Transverse colon (tissue), 4 donors: ENCODE measurements at regions of chr12 and their contacts with region 1.

Region 1: DNA sequence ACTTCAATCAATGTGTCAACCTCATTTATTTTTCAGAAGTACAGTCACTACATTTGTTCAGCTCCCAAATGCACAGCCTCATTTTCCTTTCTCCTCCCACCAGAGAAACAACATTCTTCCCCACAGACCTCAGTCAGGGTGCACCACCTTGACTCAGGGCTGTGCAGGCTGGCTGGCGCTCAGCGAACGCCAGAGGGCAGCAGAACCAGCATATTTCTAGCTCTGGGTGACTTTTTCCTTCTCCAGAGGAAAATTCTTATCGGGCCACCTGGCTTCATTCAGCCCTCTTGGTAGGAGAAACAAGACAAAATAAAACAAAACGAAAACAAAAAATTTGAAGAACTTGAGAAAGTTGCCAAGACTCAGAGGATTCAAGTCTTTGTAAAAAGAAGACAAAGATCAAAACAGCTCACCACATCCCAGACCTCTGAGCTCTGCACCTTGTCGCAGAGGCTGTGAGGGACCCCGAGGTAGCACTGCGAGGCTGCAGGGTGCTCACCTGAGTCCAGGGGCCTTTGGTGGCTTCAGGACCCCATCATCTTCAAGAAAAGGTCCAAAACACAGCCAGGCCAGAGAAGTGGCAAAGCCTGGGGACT is 33.7 kb downstream of the PAH start:
- DNase-seq: peak; percentile 35
- H3K4me3 ChIP-seq: no peak overlapping the region
- H3K27ac ChIP-seq: no peak overlapping the region
- H3K4me1 ChIP-seq: no peaks in the 10 kb centered on the region
- H3K27me3 ChIP-seq: peaks cover 24% of the 10 kb centered on the region
- CTCF ChIP-seq: peak; percentile 56 to 72 (median 59)
- EP300 ChIP-seq: no peak
- POLR2A ChIP-seq: no peak

Region 2: DNA sequence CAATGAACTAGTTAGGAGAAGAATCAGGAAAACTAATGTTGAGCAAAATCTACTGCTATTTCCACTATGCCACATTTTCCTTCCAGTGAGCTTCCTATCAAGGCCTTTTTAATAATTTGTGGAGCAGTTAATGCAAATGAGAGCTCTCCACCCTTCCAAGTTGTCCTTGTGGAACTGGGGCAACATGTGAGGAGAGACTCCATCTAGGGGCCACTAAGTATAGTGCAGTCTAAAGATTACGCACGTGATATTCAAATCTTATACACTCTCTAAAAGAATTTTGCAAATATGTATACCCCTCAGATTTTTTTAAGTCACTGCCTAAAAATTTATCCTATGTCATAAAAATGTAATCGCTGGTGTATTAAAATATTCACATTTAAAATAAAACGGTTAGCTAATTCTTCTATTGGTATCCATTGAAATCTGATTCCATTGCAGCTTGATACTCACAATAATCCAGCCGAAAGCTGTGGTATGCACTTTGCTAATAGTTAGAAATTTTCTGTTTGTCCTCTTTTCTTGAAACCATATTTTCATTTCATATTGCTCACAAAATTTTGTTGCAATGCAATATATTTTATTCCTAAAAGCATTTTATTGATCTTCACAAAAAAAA is 66.4 kb before region 1 on chr12:
- in situ Hi-C with region 1: no loop called
- intact Hi-C with region 1: no loop called
- DNase-seq: no peak
- H3K4me3 ChIP-seq: no peak overlapping the region
- H3K27ac ChIP-seq: no peak overlapping the region
- H3K4me1 ChIP-seq: no peaks in the 10 kb centered on the region
- H3K27me3 ChIP-seq: peaks cover 3% of the 10 kb centered on the region
- CTCF ChIP-seq: peak; percentile 23 to 55 (median 35)
- EP300 ChIP-seq: no peak
- POLR2A ChIP-seq: no peak

Region 3: DNA sequence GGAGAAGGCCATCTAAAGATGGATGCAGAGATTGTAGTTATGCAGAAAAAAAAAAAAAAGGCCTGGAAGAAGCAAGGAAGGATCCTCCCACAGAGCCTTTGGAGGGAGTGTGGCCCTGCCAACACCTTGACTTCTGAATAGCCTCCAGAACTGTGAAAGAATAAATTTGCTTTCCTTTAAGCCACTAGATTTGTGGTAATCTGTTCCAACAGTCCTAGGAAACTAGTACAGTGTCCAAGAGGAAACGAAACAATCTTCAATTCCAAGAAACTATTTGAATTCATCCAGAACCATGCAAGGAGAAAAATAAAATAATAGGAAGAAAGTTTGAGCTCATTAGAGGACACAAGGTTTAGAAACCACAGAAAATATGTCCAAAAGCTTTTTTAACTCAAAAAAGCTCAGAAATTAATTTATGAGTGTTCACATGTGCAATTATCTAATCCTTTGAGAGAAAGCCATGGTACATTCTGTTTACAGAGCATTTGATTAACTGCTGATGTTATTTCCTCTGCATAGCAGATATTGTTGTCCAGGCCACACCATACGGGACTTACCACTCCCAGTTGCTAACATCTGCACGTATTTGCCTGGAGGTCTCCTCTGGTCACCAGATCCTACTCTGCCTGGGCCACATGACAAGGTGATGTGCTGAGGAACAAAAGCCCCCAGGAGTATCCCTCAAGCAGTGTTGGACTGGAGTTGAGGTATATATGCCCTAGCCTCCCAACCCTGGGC is 673.8 kb after region 1 on chr12:
- in situ Hi-C with region 1: loop called in 1 of 4 experiments (anchors 10 kb)
- intact Hi-C with region 1: no loop called
- DNase-seq: no peak
- H3K4me3 ChIP-seq: no peak overlapping the region
- H3K27ac ChIP-seq: peak overlapping the region in 3 of 4 donors; percentile 12 to 50 (median 40)
- H3K4me1 ChIP-seq: no peaks in the 10 kb centered on the region
- H3K27me3 ChIP-seq: no peaks in the 10 kb centered on the region
- CTCF ChIP-seq: no peak
- EP300 ChIP-seq: no peak
- POLR2A ChIP-seq: no peak

Region 4: DNA sequence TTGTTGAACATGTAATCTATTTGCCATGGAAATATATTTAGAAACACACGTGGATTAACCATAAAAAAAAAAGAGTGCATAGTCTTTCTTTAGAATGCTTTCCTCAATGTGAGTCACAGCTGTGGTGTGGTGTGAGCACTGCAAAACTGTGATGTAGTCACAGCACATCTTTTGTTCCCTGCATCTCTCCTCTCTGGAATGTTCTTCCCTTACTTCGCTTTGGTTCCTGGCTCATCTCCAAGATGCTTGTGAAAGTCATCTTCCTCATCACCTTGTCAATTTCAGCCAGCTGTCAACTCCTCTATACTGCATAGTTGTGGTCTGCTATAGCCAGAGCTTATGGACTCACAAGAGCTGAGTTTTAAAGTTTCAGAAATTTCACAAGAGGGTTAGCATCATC is 764.0 kb after region 1 on chr12:
- in situ Hi-C with region 1: no loop called
- intact Hi-C with region 1: no loop called
- DNase-seq: no peak
- H3K4me3 ChIP-seq: no peak overlapping the region
- H3K27ac ChIP-seq: no peak overlapping the region
- H3K4me1 ChIP-seq: peaks cover 0 to 7% (median 0%) of the 10 kb centered on the region in 4 donors
- H3K27me3 ChIP-seq: no peaks in the 10 kb centered on the region
- CTCF ChIP-seq: no peak
- EP300 ChIP-seq: no peak
- POLR2A ChIP-seq: no peak